ENCODE measurements at regions of chr12 and their contacts with region 1.

Region 1: GRCh38 chr12:13211859-13212664 is 15.5 kb downstream of the EMP1 start:
- DNase-seq: peak; percentile 73 to 78 (median 76)
- H3K4me3 ChIP-seq: no peak overlapping the region
- H3K4me3 Mint-ChIP-seq: peak overlapping the region; percentile 12 to 80 (median 47)
- H3K27ac ChIP-seq: no peak overlapping the region
- H3K27ac Mint-ChIP-seq: peak overlapping the region in 6 of 7 donors; percentile 19 to 91 (median 79)
- H3K4me1 ChIP-seq: peaks cover 10% of the 10 kb centered on the region
- H3K4me1 Mint-ChIP-seq: peaks cover 5 to 13% (median 7%) of the 10 kb centered on the region in 4 donors
- H3K27me3 ChIP-seq: no peaks in the 10 kb centered on the region
- H3K27me3 Mint-ChIP-seq: no peaks in the 10 kb centered on the region

Region 2: GRCh38 chr12:12837025-12837872 is 374.8 kb before region 1 on chr12:
- CTCF ChIA-PET with region 1: interaction called, 7 read pairs
- POLR2A ChIA-PET with region 1: no interaction called
- intact Hi-C with region 1: loop called (anchors 1 kb)
- DNase-seq: peak; percentile 38 to 49 (median 47)
- H3K4me3 ChIP-seq: no peak overlapping the region
- H3K4me3 Mint-ChIP-seq: peak overlapping the region in 5 of 8 donors; percentile 1 to 76 (median 24)
- H3K27ac ChIP-seq: no peak overlapping the region
- H3K27ac Mint-ChIP-seq: peak overlapping the region; percentile 1 to 87 (median 52)
- H3K4me1 ChIP-seq: peaks cover 18% of the 10 kb centered on the region
- H3K4me1 Mint-ChIP-seq: peaks cover 7 to 24% (median 16%) of the 10 kb centered on the region in 4 donors
- H3K27me3 ChIP-seq: no peaks in the 10 kb centered on the region
- H3K27me3 Mint-ChIP-seq: no peaks in the 10 kb centered on the region

Region 3: DNA sequence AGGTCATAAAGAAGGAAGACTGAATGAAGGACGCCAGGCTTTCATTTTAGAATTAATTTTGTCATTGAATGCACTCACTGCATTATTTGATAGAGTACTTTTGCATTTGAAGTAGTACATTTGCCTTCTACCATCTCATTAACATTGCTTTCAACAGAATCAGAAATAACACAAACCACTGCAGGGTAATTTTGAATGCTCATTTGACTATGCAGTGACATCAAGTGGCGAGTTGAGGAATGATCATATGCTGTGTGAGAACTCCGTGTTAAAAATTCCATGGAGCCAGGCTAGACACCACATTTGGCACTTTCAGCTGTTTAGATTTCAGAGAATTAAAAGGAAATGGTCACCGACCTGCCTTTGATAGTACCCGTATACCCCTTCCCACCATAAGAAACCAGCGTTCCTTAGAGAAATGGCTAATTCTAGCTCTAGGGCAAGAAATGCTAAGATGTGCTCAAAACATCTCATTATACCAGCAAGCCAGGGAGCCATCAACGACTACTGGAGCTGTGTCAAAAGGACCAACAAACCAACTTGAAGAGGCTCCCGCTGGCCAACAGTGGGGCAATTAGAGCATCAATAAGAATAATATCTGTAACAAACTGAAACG is 228.5 kb before region 1 on chr12:
- CTCF ChIA-PET with region 1: interaction called, 8 read pairs
- POLR2A ChIA-PET with region 1: no interaction called
- intact Hi-C with region 1: loop called (anchors 5 kb)
- DNase-seq: no peak
- H3K4me3 ChIP-seq: no peak overlapping the region
- H3K4me3 Mint-ChIP-seq: no peak overlapping the region
- H3K27ac ChIP-seq: no peak overlapping the region
- H3K27ac Mint-ChIP-seq: peak overlapping the region in 1 of 7 donors; percentile 52
- H3K4me1 ChIP-seq: no peaks in the 10 kb centered on the region
- H3K4me1 Mint-ChIP-seq: peaks cover 0 to 2% (median under 1%) of the 10 kb centered on the region in 4 donors
- H3K27me3 ChIP-seq: no peaks in the 10 kb centered on the region
- H3K27me3 Mint-ChIP-seq: no peaks in the 10 kb centered on the region

Region 4: GRCh38 chr12:13094347-13094746 is 117.7 kb before region 1 on chr12:
- CTCF ChIA-PET with region 1: interaction called, 213 read pairs
- POLR2A ChIA-PET with region 1: interaction called, 52 read pairs
- intact Hi-C with region 1: loop called (anchors 1 kb)
- DNase-seq: no peak
- H3K4me3 ChIP-seq: no peak overlapping the region
- H3K4me3 Mint-ChIP-seq: no peak overlapping the region
- H3K27ac ChIP-seq: no peak overlapping the region
- H3K27ac Mint-ChIP-seq: no peak overlapping the region
- H3K4me1 ChIP-seq: peaks cover 19% of the 10 kb centered on the region
- H3K4me1 Mint-ChIP-seq: peaks cover 10 to 18% (median 15%) of the 10 kb centered on the region in 4 donors
- H3K27me3 ChIP-seq: no peaks in the 10 kb centered on the region
- H3K27me3 Mint-ChIP-seq: peaks cover 0 to 6% of the 10 kb centered on the region in 2 donors

Region 5: DNA sequence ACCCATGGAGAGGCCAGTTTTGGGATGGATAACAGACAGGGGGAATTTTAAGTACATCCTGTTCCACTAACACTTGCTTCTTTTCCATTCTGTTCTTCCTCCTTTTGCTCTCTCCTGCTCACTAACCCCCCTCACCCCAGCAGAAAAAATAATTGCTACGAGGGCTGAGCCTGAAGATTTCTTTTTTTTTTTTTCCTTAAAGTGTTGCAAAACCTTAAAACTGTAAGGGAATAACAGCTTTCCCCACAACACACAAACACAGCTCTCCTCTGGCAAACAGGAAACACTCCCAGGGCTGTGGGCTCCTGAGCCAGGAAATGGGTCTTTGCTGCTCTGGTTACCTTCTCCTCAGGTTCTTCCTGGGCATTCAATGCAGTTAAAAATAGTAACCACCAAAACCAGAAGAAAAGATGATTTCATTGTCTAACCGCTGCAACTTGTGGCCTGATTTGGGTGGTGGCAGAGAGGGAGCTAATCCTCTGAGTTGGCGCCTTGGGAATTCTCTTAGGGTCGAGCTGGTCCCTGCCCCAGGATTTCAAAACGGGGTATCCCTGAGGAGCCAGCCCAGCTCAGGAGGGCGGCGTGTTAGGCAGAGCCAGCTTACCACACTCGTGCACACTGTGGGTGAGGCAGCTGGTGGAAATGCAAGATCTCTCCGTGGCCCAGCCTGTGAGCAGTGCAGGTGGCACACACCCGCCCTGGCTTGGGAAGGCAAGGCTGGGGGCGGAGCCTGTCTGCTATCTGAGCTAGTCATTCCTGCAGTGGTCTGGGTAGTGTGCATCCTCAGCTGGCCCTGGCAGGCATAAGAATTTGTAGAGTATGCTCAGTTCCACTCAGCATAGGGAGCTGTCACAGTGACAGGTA is 32.6 kb before region 1 on chr12:
- CTCF ChIA-PET with region 1: interaction called, 12 read pairs
- POLR2A ChIA-PET with region 1: interaction called, 3 read pairs
- intact Hi-C with region 1: no loop called
- DNase-seq: peak; percentile 34 to 56 (median 39)
- H3K4me3 ChIP-seq: peak overlapping the region in 1 of 2 donors; percentile 28
- H3K4me3 Mint-ChIP-seq: peak overlapping the region; percentile 71 to 89 (median 78)
- H3K27ac ChIP-seq: no peak overlapping the region
- H3K27ac Mint-ChIP-seq: peak overlapping the region; percentile 63 to 87 (median 72)
- H3K4me1 ChIP-seq: peaks cover 17% of the 10 kb centered on the region
- H3K4me1 Mint-ChIP-seq: peaks cover 15 to 28% (median 23%) of the 10 kb centered on the region in 4 donors
- H3K27me3 ChIP-seq: no peaks in the 10 kb centered on the region
- H3K27me3 Mint-ChIP-seq: peaks cover 0 to 2% of the 10 kb centered on the region in 2 donors

Region 6: DNA sequence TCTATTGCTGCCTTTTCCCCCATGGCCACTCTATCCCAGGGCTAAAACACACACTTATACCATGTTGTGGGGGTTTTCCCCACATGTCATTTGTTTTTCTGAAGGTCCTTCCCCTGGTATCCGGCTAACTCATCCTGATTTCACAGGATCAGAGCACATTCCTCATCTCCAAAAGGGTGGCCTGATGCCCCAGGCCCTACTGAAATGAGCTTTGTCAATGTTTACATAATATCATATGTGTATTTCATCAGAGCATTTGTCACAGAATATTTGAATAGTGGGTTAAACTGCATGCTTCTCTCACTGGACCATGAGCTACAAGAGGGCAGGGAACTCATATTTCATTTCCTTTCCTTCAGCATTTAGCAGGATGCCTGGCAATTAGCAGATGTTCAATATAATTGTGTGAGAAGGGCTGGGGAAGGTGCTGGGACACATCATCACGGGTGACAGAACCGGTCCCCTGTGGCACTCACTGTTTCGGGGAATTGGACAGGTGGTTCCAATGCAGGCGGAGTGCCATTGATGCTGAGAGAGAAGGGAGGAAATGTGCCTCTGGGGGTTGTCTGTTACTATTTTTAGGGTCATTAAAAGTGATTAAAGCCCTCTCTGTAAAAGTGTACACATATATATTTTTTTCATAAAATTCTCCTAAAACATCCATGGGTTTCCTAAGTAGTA is 11.3 kb after region 1 on chr12:
- CTCF ChIA-PET with region 1: interaction called, 29 read pairs
- POLR2A ChIA-PET with region 1: no interaction called
- intact Hi-C with region 1: no loop called
- DNase-seq: no peak
- H3K4me3 ChIP-seq: no peak overlapping the region
- H3K4me3 Mint-ChIP-seq: no peak overlapping the region
- H3K27ac ChIP-seq: no peak overlapping the region
- H3K27ac Mint-ChIP-seq: no peak overlapping the region
- H3K4me1 ChIP-seq: no peaks in the 10 kb centered on the region
- H3K4me1 Mint-ChIP-seq: no peaks in the 10 kb centered on the region
- H3K27me3 ChIP-seq: peaks cover 5% of the 10 kb centered on the region
- H3K27me3 Mint-ChIP-seq: peaks cover 15 to 16% of the 10 kb centered on the region in 2 donors

Region 7: DNA sequence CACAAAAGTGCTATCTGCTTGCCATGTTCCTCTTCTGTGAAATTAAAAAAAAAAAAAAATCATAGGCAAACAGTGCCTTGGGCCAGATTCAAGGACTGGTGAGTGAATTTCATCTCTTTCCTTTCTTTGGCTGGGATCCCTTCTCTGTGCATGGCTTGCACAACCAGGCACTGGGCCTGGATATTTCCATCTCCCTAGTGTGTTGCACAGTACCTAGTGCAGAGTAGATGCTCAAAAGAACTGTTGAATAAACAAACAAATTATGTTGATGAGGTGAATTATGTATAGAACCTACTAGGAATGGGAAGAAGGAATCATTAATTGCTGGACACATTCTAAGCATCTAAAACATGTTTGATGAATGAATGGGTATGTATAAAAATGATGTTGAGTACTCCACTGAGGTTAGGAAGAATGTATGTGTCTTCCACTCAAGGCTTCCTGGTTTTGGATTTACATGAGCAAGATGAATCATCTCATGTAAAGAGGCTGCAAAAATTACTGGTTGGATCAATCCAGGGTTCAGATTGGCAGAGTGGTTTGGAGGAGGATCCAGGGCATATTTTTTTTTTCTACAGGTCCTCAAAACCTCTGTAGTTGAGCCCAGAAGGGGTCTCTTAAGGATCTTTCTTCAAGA is 77.7 kb after region 1 on chr12:
- CTCF ChIA-PET with region 1: no interaction called
- POLR2A ChIA-PET with region 1: no interaction called
- intact Hi-C with region 1: no loop called
- DNase-seq: no peak
- H3K4me3 ChIP-seq: no peak overlapping the region
- H3K4me3 Mint-ChIP-seq: no peak overlapping the region
- H3K27ac ChIP-seq: no peak overlapping the region
- H3K27ac Mint-ChIP-seq: peak overlapping the region in 1 of 7 donors; percentile 16
- H3K4me1 ChIP-seq: no peaks in the 10 kb centered on the region
- H3K4me1 Mint-ChIP-seq: no peaks in the 10 kb centered on the region
- H3K27me3 ChIP-seq: no peaks in the 10 kb centered on the region
- H3K27me3 Mint-ChIP-seq: peaks cover 0 to 7% of the 10 kb centered on the region in 2 donors

Region 8: GRCh38 chr12:13595536-13596443 is 383.7 kb after region 1 on chr12:
- CTCF ChIA-PET with region 1: no interaction called
- POLR2A ChIA-PET with region 1: no interaction called
- intact Hi-C with region 1: no loop called
- DNase-seq: no peak
- H3K4me3 ChIP-seq: no peak overlapping the region
- H3K4me3 Mint-ChIP-seq: no peak overlapping the region
- H3K27ac ChIP-seq: no peak overlapping the region
- H3K27ac Mint-ChIP-seq: no peak overlapping the region
- H3K4me1 ChIP-seq: no peaks in the 10 kb centered on the region
- H3K4me1 Mint-ChIP-seq: no peaks in the 10 kb centered on the region
- H3K27me3 ChIP-seq: no peaks in the 10 kb centered on the region
- H3K27me3 Mint-ChIP-seq: no peaks in the 10 kb centered on the region

Region 9: DNA sequence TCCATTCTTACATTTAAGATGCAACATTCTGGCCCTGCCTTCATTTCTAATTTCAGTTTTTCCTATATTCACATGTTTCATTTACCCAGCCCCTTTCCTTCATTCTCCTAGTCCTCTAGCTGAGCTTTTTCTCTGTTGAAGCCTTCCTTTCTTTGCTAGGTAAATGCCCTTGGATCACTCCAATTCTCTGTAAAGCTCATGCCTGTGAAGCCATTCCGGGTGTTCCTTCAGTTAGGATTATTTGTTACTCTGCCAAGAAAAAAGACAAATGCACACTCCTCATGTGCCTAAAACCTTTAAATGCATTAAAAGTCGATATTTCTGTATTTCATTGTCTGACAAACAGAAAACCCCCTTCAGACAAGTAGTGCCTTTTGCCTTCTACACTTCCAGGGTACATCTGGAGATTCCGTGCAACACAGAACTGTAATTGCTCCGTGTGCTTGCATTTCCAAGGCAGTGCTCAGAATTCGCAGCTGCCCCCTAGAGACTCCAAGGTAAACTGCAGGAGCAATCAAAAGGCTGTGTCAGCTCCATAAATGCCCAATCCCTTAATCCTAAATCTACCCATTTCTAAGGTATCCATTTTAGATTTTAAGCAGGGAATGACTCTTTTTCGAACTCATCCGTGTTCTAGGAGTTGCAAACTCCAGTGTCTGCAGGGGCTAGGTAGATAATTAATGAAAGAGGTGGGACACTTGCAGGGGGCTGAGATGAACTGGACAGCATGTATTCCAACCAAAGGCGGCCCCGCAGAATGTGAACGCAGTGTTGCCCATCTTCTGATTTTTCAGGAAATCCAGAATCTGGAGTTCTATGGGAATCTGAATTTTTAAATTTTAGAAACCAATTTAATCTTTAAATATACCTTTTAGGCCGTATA is 449.2 kb after region 1 on chr12:
- CTCF ChIA-PET with region 1: no interaction called
- POLR2A ChIA-PET with region 1: no interaction called
- intact Hi-C with region 1: loop called (anchors 5 kb)
- DNase-seq: peak in 1 of 5 donors; percentile 3
- H3K4me3 ChIP-seq: no peak overlapping the region
- H3K4me3 Mint-ChIP-seq: no peak overlapping the region
- H3K27ac ChIP-seq: no peak overlapping the region
- H3K27ac Mint-ChIP-seq: no peak overlapping the region
- H3K4me1 ChIP-seq: no peaks in the 10 kb centered on the region
- H3K4me1 Mint-ChIP-seq: peaks cover 0 to 2% (median 0%) of the 10 kb centered on the region in 4 donors
- H3K27me3 ChIP-seq: no peaks in the 10 kb centered on the region
- H3K27me3 Mint-ChIP-seq: peaks cover 2 to 3% of the 10 kb centered on the region in 2 donors

Region 10: DNA sequence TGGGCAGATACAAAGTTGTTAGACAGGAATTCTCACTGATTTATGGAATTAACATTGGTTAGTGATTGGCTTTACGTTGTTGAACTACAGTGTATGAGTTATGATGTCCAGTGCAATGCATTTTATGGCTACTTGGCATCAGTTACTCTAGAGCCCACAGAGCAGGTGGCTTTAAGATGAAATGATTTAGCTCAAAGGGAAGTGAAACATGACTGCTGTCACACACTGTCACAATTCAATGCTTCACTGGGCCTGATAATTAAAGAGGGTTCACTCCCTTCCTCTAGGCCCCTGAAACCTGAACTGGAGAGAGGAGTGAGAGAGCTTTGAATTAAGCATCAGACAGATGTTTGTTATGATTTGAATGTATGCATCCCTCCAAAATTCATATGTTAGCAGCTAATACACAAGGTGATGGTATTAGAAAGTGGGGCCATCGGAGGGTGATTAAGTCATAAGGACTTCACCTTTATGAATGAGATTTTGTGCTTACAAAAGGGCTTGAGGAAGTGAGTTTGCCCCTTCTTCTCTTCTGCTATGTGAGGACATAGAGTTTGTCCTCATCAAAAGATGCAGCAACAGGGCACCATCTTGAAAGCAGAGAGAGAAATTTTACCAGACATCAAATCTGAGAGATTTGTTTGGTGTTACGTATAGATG is 945.2 kb after region 1 on chr12:
- CTCF ChIA-PET with region 1: no interaction called
- POLR2A ChIA-PET with region 1: no interaction called
- intact Hi-C with region 1: no loop called
- DNase-seq: no peak
- H3K4me3 ChIP-seq: no peak overlapping the region
- H3K4me3 Mint-ChIP-seq: no peak overlapping the region
- H3K27ac ChIP-seq: no peak overlapping the region
- H3K27ac Mint-ChIP-seq: no peak overlapping the region
- H3K4me1 ChIP-seq: no peaks in the 10 kb centered on the region
- H3K4me1 Mint-ChIP-seq: no peaks in the 10 kb centered on the region
- H3K27me3 ChIP-seq: no peaks in the 10 kb centered on the region
- H3K27me3 Mint-ChIP-seq: peaks cover 0 to 16% of the 10 kb centered on the region in 2 donors